Heart right ventricle (tissue), 16 donors: ENCODE measurements at regions of chr3 and their contacts with region 1.

Region 1: GRCh38 chr3:197256836-197257444 is 41.5 kb downstream of the DLG1 start:
- DNase-seq: peak in 1 of 2 donors; percentile 28
- ATAC-seq: no peak
- H3K4me3 ChIP-seq: no peak overlapping the region
- H3K27ac ChIP-seq: no peak overlapping the region
- H3K4me1 ChIP-seq: peaks cover 0 to 49% (median 21%) of the 10 kb centered on the region in 9 donors
- H3K27me3 ChIP-seq: no peaks in the 10 kb centered on the region
- CTCF ChIP-seq: peak; percentile 59 to 84 (median 72)

Region 2: GRCh38 chr3:196842567-196843434 is 414.1 kb before region 1 on chr3:
- intact Hi-C with region 1: no loop called
- DNase-seq: no peak
- ATAC-seq: no peak
- H3K4me3 ChIP-seq: no peak overlapping the region
- H3K27ac ChIP-seq: no peak overlapping the region
- H3K4me1 ChIP-seq: no peaks in the 10 kb centered on the region
- H3K27me3 ChIP-seq: peaks cover 0 to under 1% (median 0%) of the 10 kb centered on the region in 7 donors
- CTCF ChIP-seq: no peak

Region 3: GRCh38 chr3:197501879-197502620 is 245.1 kb after region 1 on chr3:
- intact Hi-C with region 1: loop called in 3 of 10 experiments (anchors 5 to 10 kb)
- DNase-seq: no peak
- ATAC-seq: peak in 6 of 8 donors; percentile 21 to 61 (median 52)
- H3K4me3 ChIP-seq: no peak overlapping the region
- H3K27ac ChIP-seq: no peak overlapping the region
- H3K4me1 ChIP-seq: no peaks in the 10 kb centered on the region
- H3K27me3 ChIP-seq: peaks cover 0 to 6% (median 0%) of the 10 kb centered on the region in 7 donors
- CTCF ChIP-seq: peak in 8 of 9 donors; percentile 9 to 63 (median 42)

Region 4: GRCh38 chr3:197511130-197511529 is 254.2 kb after region 1 on chr3:
- intact Hi-C with region 1: loop called in 9 of 10 experiments (anchors 1 to 10 kb)
- DNase-seq: no peak
- ATAC-seq: no peak
- H3K4me3 ChIP-seq: no peak overlapping the region
- H3K27ac ChIP-seq: no peak overlapping the region
- H3K4me1 ChIP-seq: peaks cover 0 to 11% (median 8%) of the 10 kb centered on the region in 9 donors
- H3K27me3 ChIP-seq: peaks cover 0 to 1% (median 0%) of the 10 kb centered on the region in 7 donors
- CTCF ChIP-seq: no peak